Right ventricle myocardium superior (tissue), 1 donor: ENCODE measurements at regions of chr7 and their contacts with region 1.

Region 1: GRCh38 chr7:77759294-77759889 is 38.8 kb downstream of the TMEM60 start:
- DNase-seq: no peak
- ATAC-seq: peak; percentile 85

Region 2: DNA sequence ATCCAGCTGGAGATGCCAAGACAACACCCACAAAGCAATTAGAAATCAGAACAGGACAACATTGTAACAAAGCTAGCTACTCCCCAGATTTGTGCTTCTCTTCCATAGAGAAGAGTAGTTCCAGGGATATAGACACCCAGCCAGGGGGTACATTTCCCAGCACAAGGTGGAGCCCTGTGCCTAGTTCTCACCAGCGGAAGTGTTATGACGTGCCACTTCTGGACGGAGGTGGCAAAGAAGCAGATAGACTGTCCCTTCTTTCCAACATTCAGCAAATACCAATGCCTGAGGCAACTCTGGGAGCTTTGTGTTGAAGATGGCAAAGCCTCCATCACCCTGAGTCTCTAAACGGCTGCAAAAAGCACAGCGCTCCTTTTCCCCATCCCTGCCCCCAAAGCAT is 319.8 kb before region 1 on chr7:
- intact Hi-C with region 1: loop called (anchors 10 kb)
- DNase-seq: peak; percentile 53
- ATAC-seq: peak; percentile 86

Region 3: DNA sequence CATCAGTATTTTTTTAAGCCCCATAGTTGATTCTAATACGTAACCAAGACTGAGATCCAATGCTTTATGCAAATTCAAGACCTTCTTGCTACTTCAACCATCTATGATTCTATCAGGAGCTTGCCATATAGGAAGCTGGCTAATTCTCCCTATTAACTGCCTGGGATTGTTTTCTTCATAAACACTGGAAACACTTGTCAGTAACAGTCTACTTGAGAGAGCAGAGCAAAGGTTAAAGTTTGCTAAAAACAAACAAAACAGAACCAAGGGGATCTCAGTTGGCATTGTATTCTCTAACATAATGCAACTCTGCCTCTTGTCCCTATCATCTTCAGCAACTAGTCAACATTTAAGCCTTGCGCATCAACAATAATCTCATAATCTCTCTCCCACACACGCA is 243.3 kb before region 1 on chr7:
- intact Hi-C with region 1: no loop called
- DNase-seq: no peak
- ATAC-seq: no peak

Region 4: DNA sequence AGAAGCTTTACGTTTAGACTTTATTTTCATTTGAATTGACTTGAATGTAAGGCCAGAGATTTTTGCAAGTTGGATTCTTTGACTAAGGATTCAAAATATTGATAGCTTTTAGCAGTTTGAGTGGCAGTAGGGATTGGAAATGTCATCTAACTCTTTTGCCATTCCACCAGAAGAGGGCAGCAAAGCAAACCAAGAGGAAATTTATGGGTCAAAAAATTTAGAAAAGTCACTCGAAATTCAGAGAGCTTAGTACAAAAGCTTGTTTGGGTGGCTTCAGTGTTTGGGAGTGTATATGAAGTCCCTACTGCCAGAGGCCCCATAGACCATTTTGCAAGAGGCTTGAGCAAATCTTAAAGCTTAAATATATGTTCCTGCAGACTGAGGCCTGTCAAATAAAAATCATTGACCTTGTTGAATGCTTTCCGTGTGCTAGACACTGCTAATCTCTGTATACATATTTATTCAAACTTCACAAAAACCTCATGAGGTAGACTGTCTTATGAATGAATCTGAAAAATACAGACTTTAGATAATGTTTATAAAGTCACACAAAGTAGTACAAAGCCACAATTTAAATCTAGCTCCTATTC is 107.7 kb before region 1 on chr7:
- intact Hi-C with region 1: loop called (anchors 2 kb)
- DNase-seq: no peak
- ATAC-seq: peak; percentile 35

Region 5: GRCh38 chr7:77696198-77697028 is 63.0 kb before region 1 on chr7 and contains the start of gene RSBN1L:
- intact Hi-C with region 1: loop called (anchors 10 kb)
- DNase-seq: peak; percentile 99
- ATAC-seq: peak; percentile 98
- total RNA-seq, gene RSBN1L: 9.3 TPM